ENCODE measurements at regions of chr2 and their contacts with region 1.

Region 1: GRCh38 chr2:101252408-101253012 is at the start of gene CNOT11:
- DNase-seq: peak; percentile 97
- H3K4me3 Mint-ChIP-seq: peak within 1 kb of the TSS; percentile 99
- H3K27ac Mint-ChIP-seq: peak within 1 kb of the TSS; percentile 98
- H3K4me1 Mint-ChIP-seq: peaks cover 57% of the 10 kb centered on the region
- H3K27me3 Mint-ChIP-seq: no peaks in the 10 kb centered on the region
- total RNA-seq, gene CNOT11: 70.6 and 74.7 TPM in 2 replicates

Region 2: DNA sequence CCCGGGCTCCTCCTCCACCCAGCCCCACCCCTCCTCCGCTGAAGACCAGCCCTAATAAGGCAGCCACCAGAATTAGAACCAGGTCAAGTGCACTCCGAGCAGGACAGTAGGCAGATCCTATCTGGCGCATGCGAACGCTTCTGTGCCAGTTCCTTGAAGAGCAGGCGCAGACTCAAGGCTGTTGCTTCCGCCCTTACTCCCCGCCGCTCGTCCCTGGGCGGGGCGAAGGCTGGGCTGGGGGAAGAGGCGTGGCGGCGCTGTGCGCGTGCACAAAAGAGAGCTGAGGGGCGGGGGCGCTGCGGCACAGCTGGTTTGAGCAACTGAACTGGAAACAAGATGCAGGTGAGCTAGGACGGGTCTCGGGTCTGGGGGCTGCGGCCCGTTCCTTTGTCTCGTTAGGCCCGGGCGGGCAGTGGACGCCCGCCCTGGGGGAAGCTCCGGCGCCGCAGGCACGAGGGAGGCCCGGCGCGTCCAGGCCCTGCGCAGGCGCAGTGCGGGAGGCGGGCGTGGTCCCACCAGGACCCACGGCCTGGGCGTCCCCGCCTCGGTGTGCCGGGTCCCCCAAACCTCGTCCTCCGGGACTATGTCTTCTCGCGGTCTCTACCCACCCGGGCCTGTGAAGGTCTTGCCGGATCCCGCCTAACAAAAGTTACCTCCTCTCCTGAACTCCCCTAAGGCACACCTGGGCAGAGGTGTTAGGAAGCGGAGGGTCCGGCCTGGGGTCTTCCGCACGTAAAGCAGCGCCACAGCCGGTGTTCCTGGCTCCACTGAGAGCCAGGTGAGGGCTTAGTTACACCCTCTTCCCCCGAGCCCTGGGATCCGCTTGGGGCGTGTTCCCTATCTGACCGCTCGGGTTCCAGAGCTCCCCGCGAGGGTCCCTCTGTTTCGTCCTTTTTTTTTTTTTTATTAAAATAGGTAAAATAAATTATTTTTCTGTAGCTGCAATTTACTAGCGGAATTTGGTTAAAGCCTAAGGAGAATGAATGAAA is 689.5 kb before region 1 on chr2 and contains the start of gene PDCL3:
- intact Hi-C with region 1: loop called (anchors 1 kb)
- DNase-seq: peak; percentile 93
- H3K4me3 Mint-ChIP-seq: peak within 1 kb of the TSS; percentile 97
- H3K27ac Mint-ChIP-seq: peak within 1 kb of the TSS; percentile 99
- H3K4me1 Mint-ChIP-seq: peaks cover 52% of the 10 kb centered on the region
- H3K27me3 Mint-ChIP-seq: no peaks in the 10 kb centered on the region
- total RNA-seq, gene PDCL3: 39.2 and 45.5 TPM in 2 replicates

Region 3: DNA sequence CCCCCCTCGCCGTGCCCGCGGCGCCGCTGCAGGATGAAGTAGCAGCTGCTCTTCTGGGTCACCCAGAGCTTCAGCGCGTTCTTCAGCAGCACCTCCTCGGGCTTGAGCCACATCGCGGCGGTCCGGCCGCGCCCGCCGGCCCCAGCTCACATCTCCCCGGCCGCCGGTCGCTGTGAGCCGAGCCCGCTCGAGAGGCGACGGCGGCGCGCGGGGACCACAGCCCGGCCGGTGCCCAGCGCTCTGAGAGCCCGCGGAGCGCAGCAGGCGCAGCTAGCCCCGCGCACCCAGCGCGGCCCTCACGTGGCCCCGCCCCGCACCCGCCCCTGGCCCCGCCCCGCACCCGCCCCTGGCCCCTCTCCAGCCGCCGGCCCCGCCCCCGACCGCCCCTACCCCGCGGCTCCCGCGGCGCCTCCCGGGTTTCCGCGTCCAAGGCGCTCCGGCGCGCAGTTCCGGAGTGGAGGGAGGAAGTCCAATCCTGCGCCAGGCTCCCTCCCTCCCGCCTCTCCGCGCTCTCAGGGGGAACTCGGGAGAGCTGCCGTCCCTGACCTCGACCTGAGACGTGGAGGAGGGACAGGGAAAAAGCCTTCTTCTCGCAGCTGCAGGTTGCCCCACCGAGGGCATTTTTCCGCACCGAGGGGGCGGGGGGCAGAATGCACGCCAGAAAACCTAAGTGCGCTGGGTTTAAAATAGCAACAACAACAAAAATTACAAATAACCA is 101.2 kb before region 1 on chr2 and contains the start of gene TBC1D8:
- intact Hi-C with region 1: loop called (anchors 1 kb)
- DNase-seq: peak; percentile 63
- H3K4me3 Mint-ChIP-seq: peak within 1 kb of the TSS; percentile 75
- H3K27ac Mint-ChIP-seq: no peak within 1 kb of the TSS
- H3K4me1 Mint-ChIP-seq: peaks cover 11% of the 10 kb centered on the region
- H3K27me3 Mint-ChIP-seq: peaks cover 60% of the 10 kb centered on the region
- total RNA-seq, gene TBC1D8: 0.91 and 1.1 TPM in 2 replicates

Region 4: DNA sequence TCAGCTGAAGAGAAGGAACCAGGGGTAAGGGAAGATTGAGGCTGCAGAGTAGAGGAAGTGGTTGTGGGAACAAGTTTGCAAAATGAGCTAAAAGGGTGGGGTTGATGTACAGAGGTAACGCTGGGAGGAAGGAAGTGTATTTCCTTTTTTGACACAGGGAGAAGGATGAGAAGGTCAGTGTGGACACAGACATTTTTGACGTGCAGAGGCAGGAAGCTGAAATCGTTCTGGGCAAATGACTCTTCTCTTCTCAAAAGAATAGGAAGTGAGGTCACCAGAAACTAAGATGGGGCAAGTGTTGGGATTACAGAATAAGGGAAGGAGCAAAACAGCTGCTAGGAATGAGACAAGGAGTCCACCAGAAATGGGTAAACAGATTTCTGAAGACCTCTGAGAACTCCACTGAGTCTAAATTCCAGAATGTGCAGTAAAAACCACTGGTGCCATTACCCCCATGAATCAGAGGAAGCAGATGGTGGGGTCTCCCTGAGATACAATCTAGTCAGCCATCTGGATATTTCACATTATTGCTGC is 76.0 kb after region 1 on chr2:
- intact Hi-C with region 1: loop called (anchors 2 kb)
- DNase-seq: peak; percentile 61
- H3K4me3 Mint-ChIP-seq: no peak overlapping the region
- H3K27ac Mint-ChIP-seq: no peak overlapping the region
- H3K4me1 Mint-ChIP-seq: peaks cover 11% of the 10 kb centered on the region
- H3K27me3 Mint-ChIP-seq: no peaks in the 10 kb centered on the region

Region 5: DNA sequence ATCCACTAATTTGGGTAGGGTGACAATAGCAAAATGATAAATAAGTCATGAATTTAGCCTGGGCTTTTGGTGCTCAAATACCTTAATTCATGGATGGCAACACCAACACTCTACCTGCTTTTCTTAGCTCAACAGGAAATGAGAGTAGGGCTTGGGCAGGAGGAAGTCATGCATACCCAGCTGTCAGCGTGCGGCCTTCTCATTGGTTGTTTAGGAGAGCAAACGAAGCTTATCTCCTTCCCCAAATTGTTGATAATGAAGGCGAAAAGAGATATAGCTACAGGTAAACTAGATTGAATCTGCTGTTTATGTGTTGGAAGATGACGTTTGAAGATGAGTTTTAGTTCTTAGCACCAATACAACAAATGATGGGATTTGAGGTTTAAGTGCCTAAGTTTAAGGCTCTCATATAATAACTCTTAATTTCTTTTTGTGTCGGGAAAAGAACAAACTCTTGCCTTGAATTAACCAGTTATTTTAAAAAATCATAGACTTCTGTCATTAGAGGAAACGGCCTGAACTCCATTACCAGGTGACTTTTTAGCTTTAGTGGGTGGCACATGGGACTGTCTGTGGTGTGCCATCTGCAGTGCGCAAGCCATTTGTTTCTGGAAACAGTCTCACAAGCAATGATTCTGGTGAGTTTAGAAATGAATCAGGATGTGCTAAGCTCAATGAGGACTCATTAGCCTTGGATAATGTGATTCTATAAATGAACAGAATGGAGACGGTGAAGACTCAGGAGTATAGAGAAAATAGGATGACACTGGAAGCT is 464.7 kb after region 1 on chr2:
- intact Hi-C with region 1: loop called (anchors 5 kb)
- DNase-seq: no peak
- H3K4me3 Mint-ChIP-seq: peak overlapping the region; percentile 59
- H3K27ac Mint-ChIP-seq: peak overlapping the region; percentile 90
- H3K4me1 Mint-ChIP-seq: peaks cover 71% of the 10 kb centered on the region
- H3K27me3 Mint-ChIP-seq: no peaks in the 10 kb centered on the region

Region 6: DNA sequence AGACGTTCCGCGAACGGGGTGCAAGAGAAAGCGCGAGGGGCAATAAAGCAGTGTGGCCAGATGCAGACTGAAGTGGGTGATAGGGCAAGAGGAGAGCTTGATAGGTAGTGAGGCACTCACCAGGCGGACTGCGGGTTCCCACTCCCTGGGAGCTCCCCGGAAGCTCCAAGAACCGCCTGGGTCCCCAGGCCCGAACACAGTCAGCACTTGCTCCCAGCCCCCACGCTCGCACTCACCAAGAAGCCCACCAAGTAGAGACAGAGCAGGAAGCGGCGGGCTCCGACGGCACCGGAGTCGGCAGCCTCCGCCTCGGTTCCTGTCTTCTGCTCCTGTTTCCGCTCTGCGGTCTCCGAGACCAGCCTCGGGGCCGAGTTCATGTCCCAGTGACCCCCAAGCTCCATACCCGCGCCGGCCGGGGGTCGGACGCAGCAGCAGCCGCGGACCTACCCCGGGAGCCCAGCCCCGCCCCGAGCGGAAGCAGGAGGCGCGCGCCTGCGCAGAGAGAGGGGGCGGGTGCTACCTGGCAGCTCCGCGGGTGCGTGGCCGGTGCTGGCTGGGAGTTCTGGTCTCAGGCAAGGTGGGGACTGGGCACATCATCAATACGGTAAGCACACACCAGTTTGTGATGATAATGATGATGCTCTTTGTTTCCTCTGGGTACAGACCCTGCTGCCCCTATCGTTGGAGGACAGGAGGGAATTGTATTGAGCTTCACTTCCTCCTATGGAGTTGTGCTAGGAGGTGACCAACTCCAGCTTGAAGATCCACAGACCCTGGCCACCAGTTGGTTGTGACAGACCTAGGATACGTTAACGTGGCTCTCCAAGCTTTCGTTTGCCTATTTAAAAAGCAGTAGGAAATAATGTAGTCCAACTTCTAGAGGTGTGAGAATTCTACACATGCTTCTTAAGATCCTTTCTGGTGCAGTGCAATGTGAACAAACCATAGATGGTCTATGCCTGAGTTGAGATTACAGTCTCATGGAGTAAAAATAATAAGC is 1484.2 kb after region 1 on chr2:
- intact Hi-C with region 1: loop called (anchors 10 kb)
- DNase-seq: peak; percentile 85
- H3K4me3 Mint-ChIP-seq: peak overlapping the region; percentile 96
- H3K27ac Mint-ChIP-seq: peak overlapping the region; percentile 84
- H3K4me1 Mint-ChIP-seq: peaks cover 28% of the 10 kb centered on the region
- H3K27me3 Mint-ChIP-seq: peaks cover 2% of the 10 kb centered on the region

Region 7: DNA sequence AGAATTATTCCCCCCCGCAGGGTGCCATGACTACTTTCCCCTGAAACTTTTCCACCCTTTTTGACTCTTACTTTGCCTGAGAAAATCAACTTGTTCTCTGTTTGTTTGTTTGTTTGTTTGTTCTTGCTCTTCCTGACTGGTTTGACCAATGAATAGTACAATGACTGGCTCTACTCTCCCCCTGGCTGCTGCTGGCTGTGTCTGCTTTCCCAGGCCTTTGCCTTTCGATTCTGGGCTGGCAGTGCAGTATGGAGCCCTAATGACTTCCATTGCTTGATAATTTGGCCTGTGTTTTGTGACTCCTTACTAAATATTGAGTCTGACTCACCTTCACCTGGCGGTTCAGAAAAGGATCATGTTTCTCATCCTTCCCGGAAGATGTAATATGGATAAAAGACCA is 1750.4 kb after region 1 on chr2:
- intact Hi-C with region 1: no loop called
- DNase-seq: no peak
- H3K4me3 Mint-ChIP-seq: no peak overlapping the region
- H3K27ac Mint-ChIP-seq: no peak overlapping the region
- H3K4me1 Mint-ChIP-seq: no peaks in the 10 kb centered on the region
- H3K27me3 Mint-ChIP-seq: no peaks in the 10 kb centered on the region